MCF 10A (cell line): ENCODE measurements at regions of chr19 and their contacts with region 1.

Region 1: DNA sequence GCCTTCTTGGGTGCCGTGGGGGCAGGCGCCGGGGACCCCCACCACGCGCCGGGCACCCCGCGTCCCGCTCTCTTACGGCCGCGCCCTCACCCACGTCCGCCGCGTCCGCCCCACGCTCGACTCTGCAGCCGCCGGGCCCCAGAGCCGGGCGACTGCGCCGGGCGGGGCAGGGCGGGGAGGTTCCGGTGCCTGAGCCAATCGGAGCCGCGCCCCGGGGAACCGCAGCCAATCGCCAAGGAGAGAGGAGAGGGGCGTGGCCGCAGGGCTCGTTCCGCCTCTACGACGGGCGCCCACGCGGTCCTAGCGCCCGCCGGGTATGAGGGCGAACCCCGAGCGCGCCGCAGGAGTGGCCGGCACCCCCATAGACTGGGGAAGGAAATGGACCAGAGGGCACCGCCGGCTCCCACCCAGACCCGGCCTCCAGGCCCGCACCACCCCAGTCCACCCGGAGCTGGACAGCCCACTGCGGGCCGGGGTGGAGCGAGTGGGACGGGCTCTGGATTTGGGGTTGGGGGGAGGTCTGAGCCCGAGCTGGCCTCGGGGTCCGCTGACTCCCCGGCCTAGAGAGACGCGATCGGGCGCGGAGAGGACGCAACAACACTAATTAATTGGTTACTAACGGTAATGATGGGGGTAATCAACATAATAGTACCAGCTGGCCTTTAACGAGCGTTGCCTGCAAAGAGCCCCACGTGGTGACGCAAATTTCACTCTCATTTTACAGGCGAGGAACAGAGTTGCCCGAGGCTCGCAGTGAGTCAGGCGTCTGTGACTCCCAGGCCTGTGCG is at the start of gene MFSD12:
- DNase-seq: peak; percentile 96
- H3K4me3 Mint-ChIP-seq: peak within 1 kb of the TSS; percentile 99
- H3K27ac Mint-ChIP-seq: peak within 1 kb of the TSS; percentile 89
- H3K4me1 Mint-ChIP-seq: peaks cover 10% of the 10 kb centered on the region
- H3K27me3 Mint-ChIP-seq: no peaks in the 10 kb centered on the region
- CTCF ChIP-seq: no peak
- total RNA-seq, gene MFSD12: 77.5 and 79.4 TPM in 2 replicates

Region 2: DNA sequence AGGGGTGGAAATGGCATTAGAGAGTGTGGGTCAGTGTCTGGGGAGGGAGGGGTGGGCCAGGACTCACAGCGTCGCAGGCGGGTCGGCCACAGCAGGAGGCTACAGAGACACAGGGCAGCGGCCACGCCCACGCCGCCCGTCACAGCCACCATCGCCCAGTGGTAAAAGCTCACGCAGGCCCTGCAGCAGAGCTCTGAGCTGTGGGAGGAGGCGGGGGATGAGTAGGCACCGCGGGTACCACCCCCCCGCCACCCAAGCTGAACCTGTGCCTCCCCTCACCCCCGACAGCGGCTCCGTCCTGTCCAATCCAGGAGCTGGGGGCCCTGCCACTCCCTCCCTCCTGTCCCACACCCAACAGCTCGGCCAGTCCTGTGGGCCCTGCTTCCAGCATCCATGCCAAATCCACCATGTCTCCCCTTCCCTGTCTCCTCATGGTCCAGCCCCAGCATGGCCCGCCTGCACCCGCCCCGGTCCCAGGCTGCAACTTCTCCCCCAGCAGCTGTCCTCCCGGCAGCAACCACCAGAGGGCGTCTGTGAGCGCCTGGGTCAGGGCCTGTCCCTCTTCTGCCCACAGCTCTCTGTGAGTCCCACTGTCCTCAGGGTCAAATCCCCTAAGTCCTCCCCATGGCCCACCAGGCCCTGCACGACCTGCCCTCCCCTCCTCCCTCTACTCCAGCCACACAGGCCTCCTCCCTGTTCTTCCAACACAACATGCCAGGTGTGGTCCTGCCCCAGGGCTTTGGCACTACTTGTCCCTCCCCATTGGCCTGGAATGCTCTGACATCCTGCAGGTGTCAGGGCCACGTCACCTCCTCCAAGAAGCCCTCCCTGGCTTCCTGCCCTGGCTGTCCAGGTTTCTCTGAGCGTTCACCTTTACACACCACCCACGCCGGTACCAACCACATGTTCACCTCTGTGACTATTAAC is 12.7 kb before region 1 on chr19:
- CTCF ChIA-PET with region 1: interaction called, 22 read pairs
- POLR2A ChIA-PET with region 1: interaction called, 15 read pairs
- intact Hi-C with region 1: no loop called
- DNase-seq: peak; percentile 77
- H3K4me3 Mint-ChIP-seq: no peak overlapping the region
- H3K27ac Mint-ChIP-seq: peak overlapping the region; percentile 85
- H3K4me1 Mint-ChIP-seq: peaks cover 11% of the 10 kb centered on the region
- H3K27me3 Mint-ChIP-seq: no peaks in the 10 kb centered on the region
- CTCF ChIP-seq: peak; percentile 97

Region 3: GRCh38 chr19:3572132-3572854 is 14.6 kb after region 1 on chr19:
- CTCF ChIA-PET with region 1: interaction called, 4 read pairs
- POLR2A ChIA-PET with region 1: interaction called, 18 read pairs
- intact Hi-C with region 1: loop called (anchors 1 kb)
- DNase-seq: peak; percentile 100
- H3K4me3 Mint-ChIP-seq: peak overlapping the region; percentile 79
- H3K27ac Mint-ChIP-seq: no peak overlapping the region
- H3K4me1 Mint-ChIP-seq: peaks cover 4% of the 10 kb centered on the region
- H3K27me3 Mint-ChIP-seq: no peaks in the 10 kb centered on the region
- CTCF ChIP-seq: no peak

Region 4: GRCh38 chr19:3700221-3701032 is 142.8 kb after region 1 on chr19 and contains the start of gene PIP5K1C:
- CTCF ChIA-PET with region 1: no interaction called
- POLR2A ChIA-PET with region 1: no interaction called
- intact Hi-C with region 1: loop called (anchors 10 kb)
- DNase-seq: peak; percentile 87
- H3K4me3 Mint-ChIP-seq: peak within 1 kb of the TSS; percentile 87
- H3K27ac Mint-ChIP-seq: peak within 1 kb of the TSS; percentile 35
- H3K4me1 Mint-ChIP-seq: no peaks in the 10 kb centered on the region
- H3K27me3 Mint-ChIP-seq: no peaks in the 10 kb centered on the region
- CTCF ChIP-seq: peak; percentile 68
- total RNA-seq, gene PIP5K1C: 13.3 and 15.8 TPM in 2 replicates